AG04450 (cell line): ENCODE measurements at regions of chr14 and their contacts with region 1.

Region 1: GRCh38 chr14:49867831-49868723 is 15.5 kb upstream of the NEMF start:
- DNase-seq: peak; percentile 62
- H3K4me3 ChIP-seq: peak overlapping the region; percentile 77
- H3K27ac ChIP-seq: peak overlapping the region; percentile 73
- H3K27me3 ChIP-seq: no peaks in the 10 kb centered on the region
- CTCF ChIP-seq: no peak

Region 2: GRCh38 chr14:49641697-49642129 is 226.4 kb before region 1 on chr14:
- CTCF ChIA-PET with region 1: no interaction called
- POLR2A ChIA-PET with region 1: no interaction called
- DNase-seq: no peak
- H3K4me3 ChIP-seq: no peak overlapping the region
- H3K27ac ChIP-seq: no peak overlapping the region
- H3K27me3 ChIP-seq: no peaks in the 10 kb centered on the region
- CTCF ChIP-seq: no peak

Region 3: DNA sequence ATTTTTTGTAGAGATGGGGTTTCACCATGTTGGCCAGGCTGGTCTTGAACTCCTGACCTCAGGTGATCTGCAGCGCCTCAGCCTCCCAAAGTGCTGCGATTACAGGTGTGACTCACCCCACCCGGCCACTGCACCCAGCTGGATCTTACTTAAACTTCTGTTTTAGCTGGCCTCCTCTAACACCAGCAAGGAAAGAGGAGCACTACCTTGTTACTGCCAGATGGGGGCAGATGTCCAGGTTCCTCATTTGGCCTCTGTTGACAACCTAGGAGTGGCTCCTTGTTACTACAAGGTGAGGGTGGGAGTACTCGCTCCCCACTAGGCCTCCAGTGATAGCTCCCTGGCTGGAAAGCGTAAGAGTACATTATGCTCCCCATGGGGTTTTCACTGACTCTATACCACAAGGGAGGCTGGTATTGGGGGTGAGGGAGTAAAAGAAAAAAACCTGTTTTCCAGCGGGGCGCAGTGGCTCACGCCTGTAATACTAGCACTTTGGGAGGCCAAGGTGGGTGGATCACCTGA is 11.7 kb after region 1 on chr14:
- CTCF ChIA-PET with region 1: interaction called, 16 read pairs
- POLR2A ChIA-PET with region 1: no interaction called
- DNase-seq: no peak
- H3K4me3 ChIP-seq: no peak overlapping the region
- H3K27ac ChIP-seq: no peak overlapping the region
- H3K27me3 ChIP-seq: no peaks in the 10 kb centered on the region
- CTCF ChIP-seq: peak; percentile 65

Region 4: DNA sequence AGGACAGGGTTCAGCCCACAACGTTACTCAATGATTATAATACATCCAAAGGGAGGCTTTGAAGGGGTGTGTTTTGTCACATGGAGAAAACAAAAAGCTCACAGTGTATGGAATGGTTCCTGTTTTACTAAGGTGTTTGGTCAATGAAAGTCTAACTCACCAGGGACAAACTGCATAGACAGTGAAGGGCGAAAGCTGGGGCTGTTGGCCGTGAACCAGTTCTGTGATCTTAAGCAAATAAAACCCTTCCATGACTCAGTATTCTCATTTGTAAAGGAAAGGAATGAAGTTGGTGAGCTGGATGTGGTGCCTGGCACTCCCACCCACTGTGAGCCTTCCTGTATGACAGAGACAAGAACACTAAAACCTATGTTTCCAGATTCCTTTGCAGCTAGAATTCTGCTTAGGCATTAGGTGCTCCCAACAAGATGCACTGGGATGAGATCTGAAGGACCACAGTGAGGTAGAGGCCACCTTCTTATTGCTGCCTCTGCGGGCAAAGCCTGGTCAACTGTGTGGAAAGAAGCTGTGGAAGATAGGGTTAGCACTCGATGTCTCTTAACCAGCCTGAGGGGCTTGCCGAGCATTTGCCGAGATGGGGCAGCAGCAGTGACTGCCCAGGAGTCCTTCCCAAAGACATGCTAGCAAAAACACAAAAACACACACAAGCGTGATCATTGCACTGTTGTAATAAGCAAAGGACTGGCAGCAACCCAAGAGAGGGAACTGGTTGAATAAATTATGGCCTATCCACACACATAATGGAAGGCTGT is 199.8 kb after region 1 on chr14:
- CTCF ChIA-PET with region 1: interaction called, 29 read pairs
- POLR2A ChIA-PET with region 1: no interaction called
- DNase-seq: no peak
- H3K4me3 ChIP-seq: no peak overlapping the region
- H3K27ac ChIP-seq: no peak overlapping the region
- H3K27me3 ChIP-seq: no peaks in the 10 kb centered on the region
- CTCF ChIP-seq: no peak

Region 5: GRCh38 chr14:50139192-50139591 is 271.1 kb after region 1 on chr14:
- CTCF ChIA-PET with region 1: interaction called, 12 read pairs
- POLR2A ChIA-PET with region 1: no interaction called
- DNase-seq: no peak
- H3K4me3 ChIP-seq: no peak overlapping the region
- H3K27ac ChIP-seq: no peak overlapping the region
- H3K27me3 ChIP-seq: no peaks in the 10 kb centered on the region
- CTCF ChIP-seq: no peak